HCT116 (cell line): ENCODE measurements at regions of chrX and their contacts with region 1.

Region 1: GRCh38 chrX:103175944-103176753 is 38.8 kb upstream of the BEX4 start:
- DNase-seq: no peak
- ATAC-seq: peak; percentile 89
- H3K4me3 ChIP-seq: peak overlapping the region; percentile 28 to 51
- H3K27ac ChIP-seq: no peak overlapping the region
- H3K4me1 ChIP-seq: peaks cover 0 to 3% of the 10 kb centered on the region in 2 experiments; a peak in 1 of 4 replicates
- H3K27me3 ChIP-seq: no peaks in the 10 kb centered on the region
- CTCF ChIP-seq: peak; percentile 72 to 75 (median 75); a peak in 5 of 6 replicates
- POLR2A ChIP-seq: no peak
- RAD21 ChIP-seq: peak; percentile 71

Region 2: GRCh38 chrX:102835504-102836146 is 340.5 kb before region 1 on chrX:
- CTCF ChIA-PET with region 1: no interaction called
- POLR2A ChIA-PET with region 1: no interaction called
- RAD21 ChIA-PET with region 1: no interaction called
- intact Hi-C with region 1: loop called (anchors 10 kb)
- DNase-seq: no peak
- ATAC-seq: peak; percentile 70
- H3K4me3 ChIP-seq: no peak overlapping the region
- H3K27ac ChIP-seq: no peak overlapping the region
- H3K4me1 ChIP-seq: peaks cover 0 to 8% of the 10 kb centered on the region in 2 experiments; a peak in 1 of 4 replicates
- H3K27me3 ChIP-seq: no peaks in the 10 kb centered on the region
- CTCF ChIP-seq: peak; percentile 15 to 47 (median 42); a peak in 3 of 6 replicates
- POLR2A ChIP-seq: no peak
- RAD21 ChIP-seq: peak; percentile 36; the same call in 1 of the 2 replicates

Region 3: DNA sequence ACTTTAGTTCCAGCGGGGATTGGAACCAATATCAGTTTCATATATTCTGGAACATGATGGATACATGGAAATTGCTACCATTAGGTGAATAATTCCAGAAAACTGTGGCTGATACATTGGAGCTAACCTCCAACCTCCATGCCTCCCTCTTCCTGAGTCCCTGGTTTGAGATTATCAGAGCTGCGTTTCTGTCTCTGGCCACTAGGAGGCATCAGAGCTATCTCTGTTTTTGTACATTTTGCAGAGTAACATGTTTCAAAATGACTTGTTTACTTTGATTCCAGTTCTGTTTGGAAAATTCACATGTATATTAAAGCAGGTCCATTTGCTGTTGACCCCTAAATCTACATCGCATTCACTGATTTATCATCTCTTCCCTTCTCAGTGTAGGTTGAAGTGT is 241.5 kb before region 1 on chrX:
- CTCF ChIA-PET with region 1: interaction called, 6 read pairs
- POLR2A ChIA-PET with region 1: no interaction called
- RAD21 ChIA-PET with region 1: no interaction called
- intact Hi-C with region 1: loop called (anchors 5 kb)
- DNase-seq: no peak
- ATAC-seq: no peak
- H3K4me3 ChIP-seq: no peak overlapping the region
- H3K27ac ChIP-seq: no peak overlapping the region
- H3K4me1 ChIP-seq: no peaks in the 10 kb centered on the region
- H3K27me3 ChIP-seq: no peaks in the 10 kb centered on the region
- CTCF ChIP-seq: peak; percentile 10 to 62 (median 59); a peak in 4 of 6 replicates
- POLR2A ChIP-seq: no peak
- RAD21 ChIP-seq: 0 out of 2 replicates have a peak, but pooled peaks have one; percentile 8